Activated CD4-positive, alpha-beta T cell treated with anti-CD3 and anti-CD28 coated beads for 36 hours (primary cell): ENCODE measurements at regions of chr6 and their contacts with region 1.

Region 1: GRCh38 chr6:143130928-143131327 is 70.2 kb downstream of the AIG1 start:
- DNase-seq: no peak
- ATAC-seq: no peak
- H3K4me3 Mint-ChIP-seq: no peak overlapping the region
- H3K27ac Mint-ChIP-seq: no peak overlapping the region
- H3K4me1 Mint-ChIP-seq: peaks cover 15% of the 10 kb centered on the region
- H3K27me3 Mint-ChIP-seq: no peaks in the 10 kb centered on the region

Region 2: GRCh38 chr6:143049611-143050010 is 81.3 kb before region 1 on chr6:
- CTCF ChIA-PET with region 1: no interaction called
- POLR2A ChIA-PET with region 1: no interaction called
- intact Hi-C with region 1: no loop called
- DNase-seq: no peak
- ATAC-seq: no peak
- H3K4me3 Mint-ChIP-seq: no peak overlapping the region
- H3K27ac Mint-ChIP-seq: no peak overlapping the region
- H3K4me1 Mint-ChIP-seq: peaks cover 3% of the 10 kb centered on the region
- H3K27me3 Mint-ChIP-seq: no peaks in the 10 kb centered on the region

Region 3: DNA sequence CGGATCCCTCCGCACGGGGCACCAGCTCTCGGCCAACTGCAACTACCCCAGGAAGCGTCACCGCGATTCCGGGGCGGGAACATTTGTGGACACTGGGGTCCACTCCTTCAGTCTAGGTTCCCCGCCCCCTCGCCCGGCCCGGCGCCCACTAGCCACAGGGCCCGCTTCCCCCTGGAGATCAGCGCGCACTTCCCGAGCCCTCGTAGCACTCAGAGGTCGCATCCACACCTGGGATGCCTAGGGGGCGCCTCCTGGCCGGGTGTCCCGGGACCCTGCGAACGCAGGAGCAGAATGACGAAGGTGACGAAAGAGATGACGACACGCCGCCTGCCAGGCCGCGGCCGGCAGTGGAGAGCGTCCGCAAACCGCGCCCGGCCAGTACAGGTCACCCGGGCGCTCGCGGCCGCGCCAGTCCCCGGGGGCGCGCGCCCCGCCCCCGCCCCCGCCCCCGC is 70.5 kb before region 1 on chr6:
- CTCF ChIA-PET with region 1: no interaction called
- POLR2A ChIA-PET with region 1: no interaction called
- intact Hi-C with region 1: loop called (anchors 2 to 5 kb)
- DNase-seq: peak; percentile 85
- ATAC-seq: peak; percentile 60
- H3K4me3 Mint-ChIP-seq: peak overlapping the region; percentile 77
- H3K27ac Mint-ChIP-seq: peak overlapping the region; percentile 88
- H3K4me1 Mint-ChIP-seq: peaks cover 30% of the 10 kb centered on the region
- H3K27me3 Mint-ChIP-seq: no peaks in the 10 kb centered on the region